ENCODE measurements at regions of chrX and their contacts with region 1.

Region 1: DNA sequence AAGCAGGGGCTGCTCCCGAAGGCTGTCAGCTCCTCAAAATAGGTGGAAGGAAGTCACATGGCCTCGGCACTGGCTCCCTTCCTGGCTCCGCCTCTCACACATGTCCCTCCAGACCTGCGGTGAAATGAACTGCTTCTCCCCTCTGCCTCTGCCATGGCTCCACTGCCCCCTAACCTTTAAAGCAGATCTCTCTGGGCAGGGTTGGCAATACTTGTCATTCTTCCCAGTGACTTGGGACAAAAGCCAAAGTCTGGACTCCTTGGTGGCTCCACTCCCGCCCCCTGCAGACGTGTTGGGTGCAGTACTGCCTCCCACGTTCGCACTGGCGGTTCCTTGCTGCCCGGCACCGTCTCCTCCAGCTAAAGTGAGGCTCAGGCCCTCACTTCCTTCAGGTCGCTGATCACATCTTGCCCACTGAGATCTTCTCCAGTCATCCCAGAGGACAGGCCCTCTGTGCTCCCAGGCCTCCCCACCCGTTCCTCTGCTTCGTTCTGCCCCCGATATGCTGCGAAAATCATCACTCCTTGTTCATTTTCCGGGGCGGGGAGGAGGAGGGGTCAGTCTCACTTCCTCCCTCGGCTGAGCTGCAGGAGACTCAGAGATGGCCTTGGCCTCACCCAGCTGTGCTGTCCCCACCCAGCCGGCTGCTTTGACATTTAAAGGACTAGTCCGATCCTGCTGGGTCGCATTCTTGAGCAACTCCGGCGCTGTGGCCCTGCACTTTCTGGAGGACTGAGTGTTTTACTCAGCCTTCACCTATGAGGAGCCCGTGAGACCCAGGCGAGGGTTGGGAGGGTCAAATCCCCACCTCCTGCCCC is 97.4 kb downstream of the PHKA2 start:
- DNase-seq: peak; percentile 86 to 90
- H3K4me3 ChIP-seq: peak overlapping the region; percentile 34
- H3K4me3 Mint-ChIP-seq: peak overlapping the region; percentile 79
- H3K27ac Mint-ChIP-seq: peak overlapping the region; percentile 92
- H3K4me1 ChIP-seq: peaks cover 47% of the 10 kb centered on the region
- H3K4me1 Mint-ChIP-seq: peaks cover 20% of the 10 kb centered on the region
- H3K27me3 ChIP-seq: no peaks in the 10 kb centered on the region
- H3K27me3 Mint-ChIP-seq: no peaks in the 10 kb centered on the region
- CTCF ChIP-seq: peak; percentile 39 to 68

Region 2: GRCh38 chrX:18410043-18410442 is 476.5 kb before region 1 on chrX:
- CTCF ChIA-PET with region 1: interaction called, 9 read pairs
- POLR2A ChIA-PET with region 1: interaction called, 3 read pairs
- intact Hi-C with region 1: loop called (anchors 1 kb)
- DNase-seq: peak in 1 of 2 experiments; percentile 34
- H3K4me3 ChIP-seq: no peak overlapping the region
- H3K4me3 Mint-ChIP-seq: no peak overlapping the region
- H3K27ac Mint-ChIP-seq: no peak overlapping the region
- H3K4me1 ChIP-seq: no peaks in the 10 kb centered on the region
- H3K4me1 Mint-ChIP-seq: no peaks in the 10 kb centered on the region
- H3K27me3 ChIP-seq: no peaks in the 10 kb centered on the region
- H3K27me3 Mint-ChIP-seq: no peaks in the 10 kb centered on the region
- CTCF ChIP-seq: peak; percentile 21 to 39

Region 3: GRCh38 chrX:18674788-18675735 is 211.5 kb before region 1 on chrX:
- CTCF ChIA-PET with region 1: interaction called, 6 read pairs
- POLR2A ChIA-PET with region 1: interaction called, 4 read pairs
- intact Hi-C with region 1: loop called (anchors 5 kb)
- DNase-seq: peak; percentile 70 to 87
- H3K4me3 ChIP-seq: peak overlapping the region; percentile 54
- H3K4me3 Mint-ChIP-seq: peak overlapping the region; percentile 66
- H3K27ac Mint-ChIP-seq: peak overlapping the region; percentile 35
- H3K4me1 ChIP-seq: no peaks in the 10 kb centered on the region
- H3K4me1 Mint-ChIP-seq: peaks cover 6% of the 10 kb centered on the region
- H3K27me3 ChIP-seq: no peaks in the 10 kb centered on the region
- H3K27me3 Mint-ChIP-seq: no peaks in the 10 kb centered on the region
- CTCF ChIP-seq: no peak

Region 4: DNA sequence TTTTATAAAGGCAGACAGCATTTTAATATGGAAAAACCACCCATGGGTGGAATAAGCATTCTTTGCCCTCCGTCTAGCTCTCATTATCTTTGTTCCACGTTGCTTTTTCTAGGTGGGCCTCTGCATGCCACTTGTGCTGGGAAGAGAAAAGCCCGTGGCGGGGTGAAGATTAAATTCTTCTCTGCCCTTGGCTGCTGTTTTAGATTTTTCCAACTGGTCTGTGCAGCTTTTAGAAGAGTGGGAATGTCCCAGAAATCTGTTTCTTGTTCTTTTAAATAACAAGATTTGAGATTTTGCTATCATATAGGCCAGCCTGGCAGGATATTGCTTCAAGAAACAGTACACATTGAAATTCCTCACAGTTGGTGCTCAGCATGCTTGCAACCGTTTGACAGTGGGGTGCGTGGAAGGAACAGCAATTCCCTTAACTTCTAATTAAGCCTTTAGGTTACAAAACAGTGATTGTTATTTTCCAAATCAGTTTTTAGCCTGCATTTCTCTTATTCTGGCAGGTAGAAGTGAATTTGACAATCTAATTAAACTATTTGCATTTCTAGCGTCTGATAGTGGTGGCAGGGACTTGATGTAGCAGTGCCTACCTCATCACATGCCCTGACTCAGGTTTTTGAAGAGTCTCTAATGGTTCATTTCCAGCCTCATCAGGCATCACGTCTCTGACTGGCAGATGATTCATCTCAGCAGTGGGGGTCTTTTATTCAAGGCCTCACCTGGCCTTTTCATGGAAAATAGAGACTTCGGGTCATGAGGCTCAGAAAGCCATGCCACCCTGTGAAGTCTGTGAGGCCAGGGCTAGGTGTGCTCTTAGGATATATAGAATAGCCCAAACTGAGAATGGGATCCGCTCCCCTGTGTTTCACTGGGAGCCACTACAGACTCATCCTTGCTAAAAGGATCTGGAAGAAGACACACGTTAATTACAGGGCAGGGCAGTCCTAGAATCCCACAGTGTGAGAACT is 128.3 kb before region 1 on chrX:
- CTCF ChIA-PET with region 1: no interaction called
- POLR2A ChIA-PET with region 1: no interaction called
- intact Hi-C with region 1: loop called (anchors 1 kb)
- DNase-seq: no peak
- H3K4me3 ChIP-seq: no peak overlapping the region
- H3K4me3 Mint-ChIP-seq: no peak overlapping the region
- H3K27ac Mint-ChIP-seq: no peak overlapping the region
- H3K4me1 ChIP-seq: peaks cover 5% of the 10 kb centered on the region
- H3K4me1 Mint-ChIP-seq: no peaks in the 10 kb centered on the region
- H3K27me3 ChIP-seq: no peaks in the 10 kb centered on the region
- H3K27me3 Mint-ChIP-seq: no peaks in the 10 kb centered on the region
- CTCF ChIP-seq: no peak

Region 5: DNA sequence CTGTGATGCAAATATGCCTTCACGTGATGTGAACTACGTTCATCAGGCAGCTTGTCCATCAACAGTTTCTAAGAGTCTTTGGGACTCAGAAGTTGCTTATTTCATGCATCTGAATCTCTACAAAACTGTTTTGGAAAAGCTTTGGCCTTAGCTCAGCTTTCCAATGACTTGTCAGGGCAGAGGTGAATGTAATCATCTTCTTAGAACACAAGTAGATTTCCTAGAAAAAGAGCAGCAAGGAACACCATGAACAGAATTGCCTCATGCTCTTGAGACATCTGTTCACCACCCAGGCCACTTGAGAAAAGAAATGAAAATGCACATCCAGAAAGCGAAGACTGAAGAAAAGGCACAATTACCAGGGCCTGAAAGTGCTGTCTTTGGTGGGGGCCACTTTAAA is 351.3 kb after region 1 on chrX:
- CTCF ChIA-PET with region 1: no interaction called
- POLR2A ChIA-PET with region 1: no interaction called
- intact Hi-C with region 1: no loop called
- DNase-seq: no peak
- H3K4me3 ChIP-seq: no peak overlapping the region
- H3K4me3 Mint-ChIP-seq: no peak overlapping the region
- H3K27ac Mint-ChIP-seq: no peak overlapping the region
- H3K4me1 ChIP-seq: no peaks in the 10 kb centered on the region
- H3K4me1 Mint-ChIP-seq: no peaks in the 10 kb centered on the region
- H3K27me3 ChIP-seq: no peaks in the 10 kb centered on the region
- H3K27me3 Mint-ChIP-seq: peaks cover 6% of the 10 kb centered on the region
- CTCF ChIP-seq: no peak